Natural killer cell (primary cell): ENCODE measurements at regions of chr6 and their contacts with region 1.

Region 1: DNA sequence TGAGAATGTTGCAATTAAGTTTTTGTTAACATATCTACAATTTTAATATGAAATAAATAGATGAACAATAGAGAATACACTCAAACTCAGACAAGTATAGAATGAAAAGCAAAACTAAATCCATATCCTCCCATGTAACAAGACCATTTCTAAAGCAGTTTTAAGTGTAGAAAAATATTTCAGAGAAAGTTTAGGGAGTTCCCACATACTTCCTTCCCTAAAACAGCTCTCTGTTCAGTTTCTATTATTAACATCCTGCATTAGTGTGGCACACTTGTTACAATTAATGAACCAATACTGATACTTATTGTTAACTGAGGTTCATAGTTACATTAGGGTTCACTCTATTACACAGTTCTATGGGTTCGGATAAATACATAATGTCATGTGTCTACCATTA is 38.4 kb downstream of the HLA-DRB5 start:
- DNase-seq: no peak
- ATAC-seq: no peak
- H3K4me3 ChIP-seq: no peak overlapping the region
- H3K4me3 Mint-ChIP-seq: no peak overlapping the region
- H3K27ac ChIP-seq: no peak overlapping the region
- H3K27ac Mint-ChIP-seq: no peak overlapping the region
- H3K4me1 ChIP-seq: no peaks in the 10 kb centered on the region
- H3K4me1 Mint-ChIP-seq: no peaks in the 10 kb centered on the region
- H3K27me3 ChIP-seq: no peaks in the 10 kb centered on the region
- H3K27me3 Mint-ChIP-seq: peaks cover 3 to 37% of the 10 kb centered on the region in 2 donors
- CTCF ChIP-seq: no peak

Region 2: DNA sequence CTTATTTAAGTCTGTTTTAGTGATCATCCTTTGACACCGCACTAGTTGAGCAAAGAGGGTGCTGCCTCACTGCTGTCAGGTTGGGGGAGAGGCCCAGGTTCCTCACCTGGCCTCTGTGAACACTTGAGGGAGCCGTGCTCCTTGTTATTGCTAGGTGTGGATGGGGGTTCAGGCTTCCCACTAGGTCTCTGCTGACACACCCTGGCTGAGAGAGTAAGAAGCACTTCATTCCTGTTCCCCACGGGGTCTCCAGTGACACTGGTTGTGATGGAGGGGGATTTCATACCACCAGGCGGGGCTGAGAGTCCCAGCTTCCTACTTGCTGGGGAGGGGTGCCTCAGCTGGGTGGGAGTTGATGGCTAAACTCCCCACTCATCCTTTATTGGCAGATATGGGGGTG is 256.8 kb before region 1 on chr6:
- intact Hi-C with region 1: no loop called
- DNase-seq: peak in 1 of 2 donors; percentile 29
- ATAC-seq: no peak
- H3K4me3 ChIP-seq: no peak overlapping the region
- H3K4me3 Mint-ChIP-seq: no peak overlapping the region
- H3K27ac ChIP-seq: no peak overlapping the region
- H3K27ac Mint-ChIP-seq: no peak overlapping the region
- H3K4me1 ChIP-seq: no peaks in the 10 kb centered on the region
- H3K4me1 Mint-ChIP-seq: no peaks in the 10 kb centered on the region
- H3K27me3 ChIP-seq: no peaks in the 10 kb centered on the region
- H3K27me3 Mint-ChIP-seq: peaks cover 0 to 5% of the 10 kb centered on the region in 2 donors
- CTCF ChIP-seq: no peak

Region 3: DNA sequence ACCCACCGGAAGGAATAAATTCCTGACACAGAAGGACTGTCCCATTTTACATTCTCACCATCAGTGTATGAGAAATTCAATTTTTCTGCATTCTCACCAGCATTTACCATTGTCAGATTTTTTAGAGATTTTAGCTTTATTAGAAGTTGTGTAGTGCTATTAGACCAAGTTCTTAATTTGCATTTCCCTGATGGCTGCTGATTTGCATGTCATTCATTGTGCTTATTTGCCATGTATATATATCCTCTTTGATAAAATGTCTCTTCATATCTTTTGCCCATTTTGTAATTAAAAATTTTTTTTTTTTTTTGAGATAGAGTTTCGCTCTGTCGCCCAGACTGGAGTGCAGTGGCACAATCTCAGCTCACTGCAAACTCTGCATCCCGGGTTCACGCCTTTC is 48.1 kb after region 1 on chr6:
- intact Hi-C with region 1: loop called (anchors 5 kb)
- DNase-seq: no peak
- ATAC-seq: no peak
- H3K4me3 ChIP-seq: no peak overlapping the region
- H3K4me3 Mint-ChIP-seq: no peak overlapping the region
- H3K27ac ChIP-seq: no peak overlapping the region
- H3K27ac Mint-ChIP-seq: no peak overlapping the region
- H3K4me1 ChIP-seq: no peaks in the 10 kb centered on the region
- H3K4me1 Mint-ChIP-seq: no peaks in the 10 kb centered on the region
- H3K27me3 ChIP-seq: no peaks in the 10 kb centered on the region
- H3K27me3 Mint-ChIP-seq: peaks cover 13 to 32% of the 10 kb centered on the region in 2 donors
- CTCF ChIP-seq: no peak

Region 4: GRCh38 chr6:32609731-32610640 is 118.3 kb after region 1 on chr6:
- intact Hi-C with region 1: no loop called
- DNase-seq: peak; percentile 20 to 95
- ATAC-seq: peak; percentile 96 to 99 (median 99)
- H3K4me3 ChIP-seq: peak overlapping the region; percentile 18
- H3K4me3 Mint-ChIP-seq: no peak overlapping the region
- H3K27ac ChIP-seq: peak overlapping the region; percentile 80
- H3K27ac Mint-ChIP-seq: no peak overlapping the region
- H3K4me1 ChIP-seq: no peaks in the 10 kb centered on the region
- H3K4me1 Mint-ChIP-seq: peaks cover 0 to 2% of the 10 kb centered on the region in 2 donors
- H3K27me3 ChIP-seq: no peaks in the 10 kb centered on the region
- H3K27me3 Mint-ChIP-seq: peaks cover 0 to 5% of the 10 kb centered on the region in 2 donors
- CTCF ChIP-seq: no peak